Activated CD4-positive, alpha-beta T cell treated with anti-CD3 and anti-CD28 coated beads for 36 hours (primary cell): ENCODE measurements at regions of chr10 and their contacts with region 1.

Region 1: DNA sequence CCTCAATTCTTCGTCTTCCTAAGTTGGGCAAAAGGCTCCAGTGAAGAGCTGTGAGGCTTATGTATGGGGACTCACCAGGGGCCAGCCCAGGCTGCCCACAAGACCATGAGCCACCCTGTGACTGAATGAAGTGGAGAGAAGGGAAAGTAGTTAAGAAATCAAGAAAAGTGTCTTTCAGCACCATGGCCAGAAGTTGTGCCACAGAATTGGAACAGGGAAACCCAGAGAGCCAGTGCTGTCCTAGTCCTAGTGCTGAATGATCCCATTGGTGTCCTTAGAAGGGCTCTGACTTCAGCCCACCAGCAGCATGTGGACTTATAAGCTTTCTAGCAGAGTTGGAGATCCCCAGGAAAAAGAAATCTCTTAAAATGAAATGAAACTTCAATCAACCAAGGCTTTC is 37.0 kb upstream of the CCSER2 start:
- DNase-seq: no peak
- ATAC-seq: no peak
- H3K4me3 Mint-ChIP-seq: no peak overlapping the region
- H3K27ac Mint-ChIP-seq: no peak overlapping the region
- H3K4me1 Mint-ChIP-seq: peaks cover 21% of the 10 kb centered on the region
- H3K27me3 Mint-ChIP-seq: peaks cover 7% of the 10 kb centered on the region

Region 2: DNA sequence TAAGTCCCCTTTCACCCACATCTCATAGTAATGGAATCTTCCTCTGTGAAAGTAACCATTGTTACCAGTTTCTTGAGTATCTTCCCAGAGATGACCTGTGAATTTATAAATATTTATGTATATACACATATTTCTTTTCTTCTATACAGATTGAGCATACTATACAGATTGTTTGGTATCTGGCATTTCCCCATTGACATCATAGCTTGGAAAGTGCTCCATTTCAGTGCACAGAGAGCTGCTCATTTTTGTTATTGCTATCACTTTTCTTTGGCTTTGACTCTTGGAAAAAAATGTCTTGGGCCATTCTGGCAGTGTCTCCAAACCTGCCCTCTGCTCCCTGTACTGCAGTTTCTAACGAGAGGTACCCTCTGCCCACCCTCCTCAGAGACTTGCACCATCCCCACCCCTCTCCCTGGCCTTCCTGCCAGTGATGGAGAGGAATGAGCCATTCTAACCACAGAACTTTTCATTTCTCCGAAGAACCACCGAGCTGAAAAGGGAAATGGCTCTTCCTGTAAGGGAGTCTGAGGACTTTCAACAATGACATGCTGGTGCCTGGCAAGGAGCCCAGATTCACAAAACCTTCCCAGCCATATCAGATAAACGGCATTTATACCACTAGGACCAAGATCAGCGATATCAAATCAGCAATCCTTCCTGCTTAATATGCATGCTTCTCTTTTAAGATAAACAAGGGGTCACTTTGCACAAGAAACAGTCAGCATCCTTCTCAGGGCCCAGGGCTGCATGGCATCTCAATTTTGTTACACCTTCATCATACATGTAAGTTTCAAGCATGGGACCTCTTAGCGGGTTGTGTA is 17.3 kb after region 1 on chr10:
- CTCF ChIA-PET with region 1: interaction called, 4 read pairs
- POLR2A ChIA-PET with region 1: no interaction called
- intact Hi-C with region 1: loop called (anchors 1 kb)
- DNase-seq: peak; percentile 75
- ATAC-seq: peak; percentile 67
- H3K4me3 Mint-ChIP-seq: peak overlapping the region; percentile 47
- H3K27ac Mint-ChIP-seq: peak overlapping the region; percentile 90
- H3K4me1 Mint-ChIP-seq: peaks cover 37% of the 10 kb centered on the region
- H3K27me3 Mint-ChIP-seq: no peaks in the 10 kb centered on the region

Region 3: GRCh38 chr10:84328418-84329195 is 37.2 kb after region 1 on chr10 and contains the start of gene CCSER2:
- CTCF ChIA-PET with region 1: no interaction called
- POLR2A ChIA-PET with region 1: interaction called, 4 read pairs
- intact Hi-C with region 1: loop called in 1 of 2 experiments (anchors 1 kb)
- DNase-seq: peak; percentile 98
- ATAC-seq: peak; percentile 74
- H3K4me3 Mint-ChIP-seq: peak within 1 kb of the TSS; percentile 93
- H3K27ac Mint-ChIP-seq: peak within 1 kb of the TSS; percentile 98
- H3K4me1 Mint-ChIP-seq: peaks cover 28% of the 10 kb centered on the region
- H3K27me3 Mint-ChIP-seq: no peaks in the 10 kb centered on the region
- total RNA-seq, gene CCSER2: 61.2 to 85.2 TPM

Region 4: GRCh38 chr10:84333864-84334451 is 42.6 kb after region 1 on chr10:
- CTCF ChIA-PET with region 1: no interaction called
- POLR2A ChIA-PET with region 1: interaction called, 4 read pairs
- intact Hi-C with region 1: loop called (anchors 1 to 2 kb)
- DNase-seq: peak; percentile 76
- ATAC-seq: peak; percentile 83
- H3K4me3 Mint-ChIP-seq: peak overlapping the region; percentile 52
- H3K27ac Mint-ChIP-seq: peak overlapping the region; percentile 93
- H3K4me1 Mint-ChIP-seq: peaks cover 38% of the 10 kb centered on the region
- H3K27me3 Mint-ChIP-seq: no peaks in the 10 kb centered on the region